ENCODE measurements at regions of chr2 and their contacts with region 1.

Region 1: DNA sequence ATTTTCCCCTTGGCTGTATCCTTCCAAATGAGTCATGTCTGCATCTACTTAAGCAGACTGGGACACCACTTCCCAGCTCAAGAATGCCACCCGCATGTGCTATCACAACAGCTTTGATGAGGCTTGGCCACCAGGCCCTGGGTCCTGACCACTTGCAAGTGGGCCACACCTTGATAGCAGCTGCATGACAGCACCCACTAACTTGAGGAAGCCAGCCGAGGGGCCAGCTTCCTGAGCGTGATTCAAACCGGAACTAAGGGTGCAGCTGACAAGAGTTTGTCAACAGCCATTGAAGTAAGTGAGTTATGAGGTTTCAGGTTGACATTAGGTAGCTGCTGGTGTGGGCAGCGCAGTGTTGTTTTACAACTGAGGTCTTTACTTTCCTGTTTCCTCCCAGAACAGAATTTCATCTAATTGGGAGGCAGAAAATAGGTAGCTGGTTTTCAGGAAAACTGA is 54.4 kb downstream of the EPHA4 start:
- DNase-seq: peak; percentile 87
- H3K4me3 Mint-ChIP-seq: no peak overlapping the region
- H3K27ac Mint-ChIP-seq: no peak overlapping the region
- H3K4me1 Mint-ChIP-seq: peaks cover 3% of the 10 kb centered on the region
- H3K27me3 Mint-ChIP-seq: peaks cover 1% of the 10 kb centered on the region

Region 2: DNA sequence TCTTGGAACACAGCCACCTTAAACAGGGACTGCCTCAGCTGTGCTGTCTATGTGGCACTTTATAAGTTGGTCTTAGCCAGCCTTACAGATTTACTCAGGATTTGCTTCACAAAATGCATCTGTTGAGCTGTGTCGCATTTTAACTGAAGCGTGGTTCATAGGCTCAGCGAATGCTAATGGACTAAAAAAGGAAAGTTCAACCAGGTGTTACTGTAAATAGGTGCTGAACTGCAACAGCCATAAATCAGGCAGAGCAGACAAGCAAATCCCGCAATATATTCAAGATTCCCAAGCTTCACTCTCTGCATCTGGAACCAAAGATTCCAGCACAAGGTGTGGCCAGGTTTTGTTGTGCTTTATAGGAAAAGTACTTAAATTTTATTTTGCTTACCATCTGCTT is 75.6 kb before region 1 on chr2:
- CTCF ChIA-PET with region 1: no interaction called
- POLR2A ChIA-PET with region 1: no interaction called
- DNase-seq: no peak
- H3K4me3 Mint-ChIP-seq: no peak overlapping the region
- H3K27ac Mint-ChIP-seq: no peak overlapping the region
- H3K4me1 Mint-ChIP-seq: peaks cover 8% of the 10 kb centered on the region
- H3K27me3 Mint-ChIP-seq: no peaks in the 10 kb centered on the region

Region 3: DNA sequence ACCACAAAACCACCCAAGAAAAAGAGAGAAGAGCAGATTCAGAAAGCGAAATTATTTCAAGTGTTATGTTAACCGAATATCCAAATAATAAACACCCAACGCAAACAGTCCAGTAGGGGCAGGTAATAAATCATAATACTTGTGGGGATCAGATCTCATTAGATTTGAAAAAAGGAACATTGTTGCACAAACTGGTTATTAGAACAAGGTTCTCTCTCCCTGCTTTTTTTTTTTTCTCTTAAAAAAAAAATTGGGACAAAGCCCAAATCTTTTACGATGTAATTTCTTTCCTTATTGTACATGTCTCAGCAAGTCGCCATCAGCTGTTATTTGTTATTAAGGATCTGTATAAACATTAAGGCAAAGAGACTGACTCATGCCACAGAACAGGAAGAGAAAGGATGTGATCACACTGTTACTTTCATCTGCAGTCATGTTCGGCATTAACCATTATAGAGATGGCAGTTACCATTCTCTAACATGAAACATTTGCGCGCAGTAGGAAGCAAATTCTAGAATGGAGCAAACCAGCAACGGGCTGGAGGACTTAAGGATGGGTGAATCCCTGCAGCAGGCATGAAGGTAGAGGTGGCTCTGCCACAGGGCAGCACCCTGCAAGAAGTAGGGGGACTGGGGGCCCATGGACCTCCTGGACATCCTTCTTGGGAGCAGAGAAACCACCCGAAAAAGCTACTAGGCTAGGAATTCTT is 12.4 kb after region 1 on chr2:
- CTCF ChIA-PET with region 1: interaction called, 17 read pairs
- POLR2A ChIA-PET with region 1: interaction called, 41 read pairs
- DNase-seq: no peak
- H3K4me3 Mint-ChIP-seq: peak overlapping the region; percentile 34
- H3K27ac Mint-ChIP-seq: peak overlapping the region; percentile 26
- H3K4me1 Mint-ChIP-seq: peaks cover 41% of the 10 kb centered on the region
- H3K27me3 Mint-ChIP-seq: peaks cover 1% of the 10 kb centered on the region

Region 4: DNA sequence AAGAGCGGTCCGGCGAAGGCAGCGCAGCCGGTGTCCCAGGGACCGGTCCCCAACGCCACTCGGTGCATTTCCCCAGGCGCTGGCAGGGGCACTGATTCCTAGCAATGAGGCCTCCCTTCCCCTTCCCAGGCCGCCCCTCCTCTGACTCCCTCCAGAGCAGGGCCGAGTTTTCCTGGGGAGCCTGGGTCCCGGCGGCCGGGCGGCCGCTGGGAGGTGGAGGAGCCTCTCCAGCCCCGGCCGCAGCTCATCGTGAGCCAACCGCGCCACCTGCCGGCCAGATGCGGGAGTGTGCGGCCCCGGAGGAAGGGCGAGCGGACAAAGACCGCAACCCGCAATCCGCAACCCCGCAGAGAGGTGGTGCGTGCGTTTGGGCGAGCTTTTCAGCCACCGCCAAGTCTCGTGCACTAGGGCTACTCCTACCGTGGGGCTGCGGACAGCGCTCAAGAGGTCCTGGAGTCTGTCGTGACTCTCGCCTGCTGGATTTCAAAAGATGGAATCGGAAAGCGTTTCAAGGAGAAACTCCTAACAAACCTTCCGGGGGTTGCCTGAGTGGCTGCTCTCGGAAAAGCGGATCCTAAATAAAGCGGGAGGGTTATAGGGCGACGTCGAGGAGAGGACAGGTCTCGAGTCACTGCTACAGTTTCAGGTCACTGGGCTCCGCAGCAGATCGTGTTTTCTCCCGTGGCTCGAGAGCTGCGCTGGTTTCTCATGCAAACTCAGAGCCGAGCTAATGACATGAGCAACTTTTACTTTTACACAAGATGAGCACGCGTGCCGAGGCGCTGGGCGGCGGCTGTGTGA is 55.9 kb after region 1 on chr2:
- CTCF ChIA-PET with region 1: interaction called, 7 read pairs
- POLR2A ChIA-PET with region 1: interaction called, 49 read pairs
- DNase-seq: peak; percentile 80
- H3K4me3 Mint-ChIP-seq: peak overlapping the region; percentile 54
- H3K27ac Mint-ChIP-seq: no peak overlapping the region
- H3K4me1 Mint-ChIP-seq: peaks cover 29% of the 10 kb centered on the region
- H3K27me3 Mint-ChIP-seq: peaks cover 56% of the 10 kb centered on the region